HCT116 (cell line): ENCODE measurements at regions of chr2 and their contacts with region 1.

Region 1: DNA sequence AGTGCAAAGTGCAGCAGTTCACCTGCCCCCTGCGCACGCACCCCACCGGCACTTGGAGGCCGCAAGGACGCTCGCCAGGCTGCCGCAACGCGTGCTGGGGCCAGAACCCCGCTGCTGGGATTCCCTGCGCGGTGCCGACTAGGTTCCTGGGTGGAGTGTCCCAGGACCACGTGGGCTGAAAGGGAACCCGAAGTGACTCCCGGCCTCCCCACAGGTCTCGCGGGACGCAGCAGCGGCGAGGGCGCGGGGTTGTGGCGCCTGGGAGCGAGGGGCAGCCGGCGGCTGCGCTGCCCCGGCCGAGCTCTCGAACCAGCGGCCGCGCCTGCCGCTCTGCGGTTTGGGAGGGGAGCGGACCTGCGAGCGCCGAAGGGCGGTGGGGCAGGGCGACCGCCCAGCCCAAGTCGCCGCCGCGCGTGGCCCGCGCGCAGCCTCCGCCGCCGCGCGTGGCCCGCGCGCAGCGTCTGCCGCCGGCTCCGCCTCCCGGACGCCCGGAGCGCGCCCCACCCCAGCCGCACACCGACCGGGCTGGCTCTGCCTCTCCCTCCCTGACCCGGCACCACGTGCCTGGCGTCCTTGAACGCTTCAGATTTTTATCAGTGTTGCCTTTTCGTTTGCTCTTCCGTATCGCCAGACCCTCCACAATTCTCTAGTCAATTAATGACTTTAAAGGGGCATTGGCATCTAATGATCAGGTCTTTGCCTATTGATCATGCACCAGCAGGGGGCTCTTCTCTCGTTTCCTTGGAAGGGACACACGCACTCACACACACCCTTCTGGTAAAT is at the start of gene FTCDNL1:
- DNase-seq: peak; percentile 35
- ATAC-seq: peak; percentile 94
- H3K4me3 ChIP-seq: peak within 1 kb of the TSS; percentile 55 to 70
- H3K27ac ChIP-seq: peak within 1 kb of the TSS; percentile 54; the same call in 1 of the 2 replicates
- H3K4me1 ChIP-seq: peaks cover 3 to 13% of the 10 kb centered on the region in 2 experiments; a peak in 3 of 4 replicates
- H3K27me3 ChIP-seq: no peaks in the 10 kb centered on the region
- CTCF ChIP-seq: peak; percentile 33 to 79 (median 73); a peak in 5 of 6 replicates
- POLR2A ChIP-seq: peak; percentile 85
- RAD21 ChIP-seq: peak; percentile 18; the same call in 1 of the 2 replicates
- total RNA-seq, gene FTCDNL1: 2.6 TPM

Region 2: GRCh38 chr2:199940373-199940772 is 89.5 kb after region 1 on chr2:
- CTCF ChIA-PET with region 1: no interaction called
- POLR2A ChIA-PET with region 1: no interaction called
- RAD21 ChIA-PET with region 1: no interaction called
- intact Hi-C with region 1: loop called (anchors 5 kb)
- DNase-seq: peak; percentile 21
- ATAC-seq: peak; percentile 73; the same call in 1 of the 2 replicates
- H3K4me3 ChIP-seq: no peak overlapping the region
- H3K27ac ChIP-seq: no peak overlapping the region
- H3K4me1 ChIP-seq: no peaks in the 10 kb centered on the region
- H3K27me3 ChIP-seq: no peaks in the 10 kb centered on the region
- CTCF ChIP-seq: peak; percentile 18 to 48 (median 33); a peak in 4 of 6 replicates
- POLR2A ChIP-seq: no peak
- RAD21 ChIP-seq: peak; percentile 63